Head of caudate nucleus (tissue), 42 donors: ENCODE measurements at regions of chr4 and their contacts with region 1.

Region 1: DNA sequence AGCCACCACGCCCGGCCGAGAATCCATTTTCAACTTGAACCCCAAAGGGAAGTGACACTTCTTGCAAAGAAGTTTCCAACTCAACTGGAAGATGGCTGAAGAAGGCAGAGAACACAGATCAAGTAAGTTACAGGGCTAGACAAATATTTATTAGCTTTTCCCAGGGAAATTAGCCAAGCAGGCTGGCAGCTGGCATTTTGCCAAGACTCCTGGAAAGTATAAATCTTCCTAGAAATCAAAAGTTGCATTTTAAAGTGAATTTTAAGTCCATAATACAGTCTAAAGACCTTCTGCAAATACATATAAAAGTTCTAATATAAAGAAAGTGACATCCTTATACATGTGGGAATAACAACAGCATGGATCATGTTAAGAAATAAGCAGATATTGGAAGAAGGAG is 3.4 kb upstream of the MRPL1 start:
- DNase-seq: peak in 1 of 42 donors; percentile 48

Region 2: DNA sequence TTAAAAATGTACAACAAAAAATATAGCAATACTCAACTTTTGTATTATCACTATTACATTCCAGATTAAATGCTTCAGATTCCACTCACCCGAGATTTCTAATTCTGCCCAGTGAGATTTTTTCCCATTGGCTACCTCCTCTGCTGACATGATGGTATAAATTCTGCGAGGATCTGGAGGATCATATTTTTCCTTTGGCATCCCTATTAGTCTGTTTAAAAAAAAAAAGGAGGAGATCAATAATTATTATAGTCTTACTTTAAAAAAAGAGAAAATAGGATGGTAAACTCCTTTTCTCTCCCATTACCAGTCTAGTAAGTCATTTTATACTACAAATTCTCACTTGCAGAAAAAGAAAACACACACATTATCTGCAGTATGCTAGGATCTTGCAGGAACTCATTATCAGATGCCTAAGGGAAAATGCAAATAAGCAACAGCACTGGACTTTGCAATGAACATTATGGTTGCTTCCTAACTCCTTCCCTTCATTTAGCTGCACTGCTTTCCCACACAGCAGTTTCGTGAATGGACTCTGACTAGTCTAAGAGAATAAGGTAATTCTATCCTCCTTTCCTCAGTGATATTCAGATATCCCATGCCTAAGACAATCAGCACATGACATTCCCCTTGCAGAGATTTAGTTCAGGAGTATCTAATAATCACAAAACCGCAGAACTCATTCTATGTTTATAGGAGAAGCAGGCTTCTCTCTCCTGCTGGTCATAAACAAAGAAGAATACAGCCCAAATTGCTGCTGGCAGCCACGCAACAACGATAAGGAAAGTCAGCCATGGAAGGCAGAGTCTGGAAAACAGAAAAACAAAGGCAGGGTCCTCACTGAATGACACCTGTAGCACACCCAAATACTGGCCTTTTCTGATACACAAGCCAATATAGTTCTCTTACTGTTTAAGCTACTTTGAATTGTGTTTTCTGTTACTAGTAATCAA is 82.8 kb before region 1 on chr4:
- intact Hi-C with region 1: no loop called
- DNase-seq: peak in 2 of 42 donors; percentile 3 to 5

Region 3: DNA sequence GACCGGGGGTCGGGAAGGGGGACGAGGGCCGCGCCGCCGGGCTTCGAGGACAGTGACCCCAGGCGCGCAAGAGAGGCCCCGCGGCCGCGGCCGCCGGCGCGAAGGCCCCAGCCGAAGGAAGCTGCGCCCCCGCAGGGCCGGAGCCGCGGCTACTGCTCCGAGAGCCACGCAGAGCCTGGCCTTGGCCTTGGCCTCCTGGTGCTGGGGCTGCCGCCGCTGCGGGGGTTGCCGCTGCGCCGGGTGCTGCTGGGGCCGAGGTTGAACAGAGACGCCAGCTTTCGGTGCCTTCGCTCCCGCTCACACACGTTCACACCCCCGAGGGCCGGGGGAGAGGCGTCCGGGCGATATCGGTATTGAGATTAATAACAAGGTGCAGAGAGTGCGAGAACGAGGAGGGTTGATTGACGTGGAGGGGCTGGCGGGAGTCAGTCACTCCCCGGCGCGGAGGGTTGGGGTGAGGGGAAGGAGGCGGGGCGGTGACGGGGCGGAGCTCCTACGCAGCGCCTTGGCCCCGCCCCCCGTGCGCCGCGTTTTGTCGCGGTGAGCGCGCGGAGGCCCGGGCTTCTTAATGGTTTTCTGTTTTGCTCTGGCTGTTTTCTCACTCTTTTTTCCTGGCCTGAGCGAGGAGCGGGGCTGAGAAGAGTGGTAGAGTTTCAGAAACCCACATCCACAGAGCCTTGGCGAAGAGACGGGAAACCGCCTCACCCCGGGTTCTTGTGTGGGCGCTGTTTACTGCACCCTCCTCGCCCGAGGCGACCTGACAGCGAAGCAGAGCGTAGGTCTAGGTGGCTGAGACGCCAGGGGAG is 39.2 kb before region 1 on chr4:
- intact Hi-C with region 1: loop called (anchors 2 kb)
- DNase-seq: peak; percentile 86 to 99 (median 96)